Right cardiac atrium (tissue), 5 donors: ENCODE measurements at regions of chr9 and their contacts with region 1.

Region 1: GRCh38 chr9:27407986-27408385 is 111.0 kb upstream of the EQTN start:
- DNase-seq: no peak
- ATAC-seq: peak in 1 of 2 donors; percentile 62
- H3K4me3 ChIP-seq: no peak overlapping the region
- H3K27ac ChIP-seq: no peak overlapping the region
- H3K4me1 ChIP-seq: peaks cover 11% of the 10 kb centered on the region
- H3K27me3 ChIP-seq: no peaks in the 10 kb centered on the region

Region 2: GRCh38 chr9:27333241-27334052 is 74.5 kb before region 1 on chr9:
- intact Hi-C with region 1: no loop called
- DNase-seq: peak; percentile 62 to 73 (median 71)
- ATAC-seq: peak; percentile 94
- H3K4me3 ChIP-seq: no peak overlapping the region
- H3K27ac ChIP-seq: no peak overlapping the region
- H3K4me1 ChIP-seq: peaks cover 6% of the 10 kb centered on the region
- H3K27me3 ChIP-seq: no peaks in the 10 kb centered on the region

Region 3: GRCh38 chr9:27457445-27457844 is 49.5 kb after region 1 on chr9:
- intact Hi-C with region 1: loop called in 1 of 4 experiments (anchors 10 kb)
- DNase-seq: peak; percentile 38 to 63 (median 61)
- ATAC-seq: peak; percentile 49 to 78
- H3K4me3 ChIP-seq: no peak overlapping the region
- H3K27ac ChIP-seq: no peak overlapping the region
- H3K4me1 ChIP-seq: peaks cover 4% of the 10 kb centered on the region
- H3K27me3 ChIP-seq: no peaks in the 10 kb centered on the region